ENCODE measurements at regions of chr6 and their contacts with region 1.

Region 1: DNA sequence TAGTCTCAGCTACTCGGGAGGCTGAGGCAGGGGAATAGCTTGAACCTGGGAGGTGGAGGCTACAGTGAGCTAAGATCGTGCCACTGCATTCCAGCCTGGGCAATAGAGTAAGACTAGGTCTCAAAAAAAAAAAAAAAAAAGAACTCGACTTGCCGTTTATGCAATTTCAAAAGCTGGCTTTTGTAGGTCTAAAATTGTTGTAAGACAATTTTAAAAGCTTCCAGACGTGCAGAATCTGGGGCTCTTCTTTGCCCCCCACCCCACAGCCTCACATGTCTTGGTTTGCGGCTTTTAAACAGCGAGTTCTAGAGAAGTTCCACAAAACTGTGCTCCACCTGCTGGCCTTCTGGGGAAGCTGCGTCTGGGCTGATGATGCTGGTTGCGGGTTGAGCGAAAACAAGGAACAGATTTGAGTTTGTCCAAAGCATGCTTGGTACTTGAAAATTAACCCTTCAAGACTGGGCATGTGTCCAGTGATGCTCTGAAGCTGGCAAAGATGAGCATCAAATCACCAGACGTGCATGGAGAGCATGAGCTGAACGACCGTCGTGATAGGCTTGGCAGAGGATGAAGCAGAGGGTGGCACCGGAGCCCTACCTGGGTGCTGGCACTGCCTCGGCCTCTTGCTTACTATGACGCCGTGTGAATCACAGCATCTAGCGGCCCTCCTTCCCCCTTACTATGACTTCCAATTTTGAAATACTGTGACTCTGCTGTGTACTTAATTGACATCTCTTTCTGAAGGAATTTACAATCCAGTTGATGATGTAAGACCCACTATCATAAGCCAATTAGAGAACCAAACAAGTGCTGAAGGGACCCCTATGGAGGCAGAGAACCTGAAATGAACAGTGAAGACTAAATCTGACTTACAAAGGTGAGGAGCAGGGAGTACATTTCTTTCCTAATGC is 171.4 kb downstream of the GMPR start:
- DNase-seq: no peak

Region 2: DNA sequence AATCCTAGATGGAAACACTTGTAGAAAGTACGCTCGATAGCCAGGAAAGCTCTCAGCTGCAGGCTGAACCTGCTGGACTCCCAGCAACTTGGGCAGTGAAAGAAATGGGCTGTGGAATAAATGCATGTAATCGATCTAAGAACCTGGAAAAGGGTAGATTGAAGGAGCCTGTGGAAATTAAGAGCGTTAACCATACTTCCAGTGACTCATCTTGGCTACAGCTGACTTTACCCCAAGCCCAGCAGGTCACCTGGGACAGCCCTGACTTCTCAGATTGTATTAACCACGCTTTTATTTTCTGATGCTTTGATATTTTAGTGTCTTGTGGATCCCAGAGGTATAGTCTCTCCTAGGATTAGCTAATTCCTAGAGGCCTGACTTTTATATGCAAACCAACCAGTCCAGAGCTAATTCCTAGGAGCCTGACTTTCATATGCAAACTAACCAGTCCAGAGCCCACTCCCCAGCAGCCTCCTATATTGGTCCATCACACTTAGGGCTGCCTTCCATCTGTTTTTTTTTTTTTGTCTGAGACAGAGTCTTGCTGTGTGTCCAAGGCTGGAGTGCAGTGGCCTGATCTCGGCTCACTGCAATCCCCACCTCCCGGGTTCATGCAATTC is 85.1 kb before region 1 on chr6:
- intact Hi-C with region 1: loop called in 1 of 2 experiments (anchors 5 kb)
- DNase-seq: no peak

Region 3: DNA sequence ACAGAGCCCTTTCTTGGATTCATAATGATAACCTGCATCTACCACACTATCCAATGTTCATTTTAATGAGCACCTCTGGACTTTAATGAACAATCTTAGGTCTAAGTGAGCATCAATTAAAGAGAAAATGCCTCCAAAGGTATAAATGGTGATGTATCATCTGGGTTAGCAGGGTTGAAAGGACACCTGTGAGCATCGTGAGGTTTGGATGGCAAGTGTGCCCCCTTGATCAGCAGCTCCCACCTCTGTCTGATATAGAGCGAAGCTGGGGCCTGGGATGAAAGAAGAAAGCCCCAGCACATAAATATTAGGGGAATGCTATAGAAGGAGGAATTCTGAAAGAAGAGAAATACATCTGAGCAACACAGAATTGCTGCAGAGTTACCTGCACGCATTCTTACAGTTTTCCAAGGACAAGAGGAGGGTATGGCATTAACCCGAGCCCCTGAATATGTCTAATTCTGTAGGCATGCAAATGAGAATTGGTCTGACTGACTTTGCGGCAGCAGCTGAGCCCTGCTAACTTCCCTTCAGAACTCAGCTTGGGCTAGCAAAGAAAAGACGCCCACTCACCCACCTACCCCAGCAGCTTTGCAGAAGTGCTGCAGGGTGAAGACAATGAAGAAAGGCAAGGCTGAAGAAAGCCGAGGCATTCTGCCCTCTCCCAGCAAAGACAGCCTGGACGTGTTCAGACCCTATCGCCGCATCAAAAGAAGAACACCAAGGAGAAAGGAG is 35.2 kb before region 1 on chr6:
- intact Hi-C with region 1: no loop called
- DNase-seq: no peak

Region 4: GRCh38 chr6:16425881-16426615 is 16.3 kb after region 1 on chr6:
- intact Hi-C with region 1: loop called in 1 of 2 experiments (anchors 2 kb)
- DNase-seq: no peak

Measured in posterior vena cava (tissue), 2 donors.